ENCODE measurements at regions of chr11 and their contacts with region 1.

Region 1: GRCh38 chr11:35391922-35392813 is 27.2 kb downstream of the SLC1A2 start:
- DNase-seq: peak; percentile 74 to 82 (median 78)
- H3K4me3 ChIP-seq: peak overlapping the region in 1 of 2 donors; percentile 16
- H3K4me3 Mint-ChIP-seq: peak overlapping the region; percentile 22 to 79 (median 64)
- H3K27ac ChIP-seq: no peak overlapping the region
- H3K27ac Mint-ChIP-seq: peak overlapping the region in 5 of 7 donors; percentile 5 to 74 (median 47)
- H3K4me1 ChIP-seq: peaks cover 19% of the 10 kb centered on the region
- H3K4me1 Mint-ChIP-seq: peaks cover 13 to 27% (median 19%) of the 10 kb centered on the region in 4 donors
- H3K27me3 ChIP-seq: no peaks in the 10 kb centered on the region
- H3K27me3 Mint-ChIP-seq: no peaks in the 10 kb centered on the region

Region 2: GRCh38 chr11:34512840-34513681 is 879.1 kb before region 1 on chr11:
- CTCF ChIA-PET with region 1: interaction called, 9 read pairs
- POLR2A ChIA-PET with region 1: no interaction called
- intact Hi-C with region 1: loop called (anchors 1 kb)
- DNase-seq: peak in 4 of 5 donors; percentile 16 to 20 (median 18)
- H3K4me3 ChIP-seq: no peak overlapping the region
- H3K4me3 Mint-ChIP-seq: no peak overlapping the region
- H3K27ac ChIP-seq: no peak overlapping the region
- H3K27ac Mint-ChIP-seq: no peak overlapping the region
- H3K4me1 ChIP-seq: no peaks in the 10 kb centered on the region
- H3K4me1 Mint-ChIP-seq: peaks cover 0 to 1% (median 0%) of the 10 kb centered on the region in 4 donors
- H3K27me3 ChIP-seq: no peaks in the 10 kb centered on the region
- H3K27me3 Mint-ChIP-seq: peaks cover 0 to under 1% of the 10 kb centered on the region in 2 donors

Region 3: GRCh38 chr11:34840736-34841386 is 551.3 kb before region 1 on chr11:
- CTCF ChIA-PET with region 1: interaction called, 4 read pairs
- POLR2A ChIA-PET with region 1: no interaction called
- intact Hi-C with region 1: loop called (anchors 1 kb)
- DNase-seq: peak in 2 of 5 donors; percentile 14 to 15
- H3K4me3 ChIP-seq: no peak overlapping the region
- H3K4me3 Mint-ChIP-seq: no peak overlapping the region
- H3K27ac ChIP-seq: no peak overlapping the region
- H3K27ac Mint-ChIP-seq: no peak overlapping the region
- H3K4me1 ChIP-seq: no peaks in the 10 kb centered on the region
- H3K4me1 Mint-ChIP-seq: no peaks in the 10 kb centered on the region
- H3K27me3 ChIP-seq: no peaks in the 10 kb centered on the region
- H3K27me3 Mint-ChIP-seq: peaks cover 11 to 25% of the 10 kb centered on the region in 2 donors

Region 4: GRCh38 chr11:34997952-34998528 is 394.1 kb before region 1 on chr11:
- CTCF ChIA-PET with region 1: interaction called, 56 read pairs
- POLR2A ChIA-PET with region 1: no interaction called
- intact Hi-C with region 1: loop called (anchors 1 kb)
- DNase-seq: peak in 4 of 5 donors; percentile 37 to 48 (median 44)
- H3K4me3 ChIP-seq: no peak overlapping the region
- H3K4me3 Mint-ChIP-seq: peak overlapping the region in 6 of 8 donors; percentile 62 to 78 (median 75)
- H3K27ac ChIP-seq: peak overlapping the region; percentile 45
- H3K27ac Mint-ChIP-seq: peak overlapping the region; percentile 57 to 95 (median 86)
- H3K4me1 ChIP-seq: peaks cover 24% of the 10 kb centered on the region
- H3K4me1 Mint-ChIP-seq: peaks cover 20 to 34% (median 24%) of the 10 kb centered on the region in 4 donors
- H3K27me3 ChIP-seq: no peaks in the 10 kb centered on the region
- H3K27me3 Mint-ChIP-seq: no peaks in the 10 kb centered on the region

Region 5: GRCh38 chr11:35214792-35215193 is 177.4 kb before region 1 on chr11:
- CTCF ChIA-PET with region 1: no interaction called
- POLR2A ChIA-PET with region 1: no interaction called
- intact Hi-C with region 1: loop called (anchors 5 kb)
- DNase-seq: peak in 1 of 5 donors; percentile 77
- H3K4me3 ChIP-seq: no peak overlapping the region
- H3K4me3 Mint-ChIP-seq: peak overlapping the region in 6 of 8 donors; percentile 7 to 76 (median 16)
- H3K27ac ChIP-seq: no peak overlapping the region
- H3K27ac Mint-ChIP-seq: peak overlapping the region; percentile 78 to 99 (median 91)
- H3K4me1 ChIP-seq: peaks cover 65% of the 10 kb centered on the region
- H3K4me1 Mint-ChIP-seq: peaks cover 57 to 92% (median 73%) of the 10 kb centered on the region in 4 donors
- H3K27me3 ChIP-seq: no peaks in the 10 kb centered on the region
- H3K27me3 Mint-ChIP-seq: no peaks in the 10 kb centered on the region

Region 6: GRCh38 chr11:35373284-35373933 is 18.8 kb before region 1 on chr11:
- CTCF ChIA-PET with region 1: interaction called, 22 read pairs
- POLR2A ChIA-PET with region 1: no interaction called
- intact Hi-C with region 1: no loop called
- DNase-seq: no peak
- H3K4me3 ChIP-seq: no peak overlapping the region
- H3K4me3 Mint-ChIP-seq: no peak overlapping the region
- H3K27ac ChIP-seq: no peak overlapping the region
- H3K27ac Mint-ChIP-seq: peak overlapping the region in 3 of 7 donors; percentile 38 to 77 (median 70)
- H3K4me1 ChIP-seq: no peaks in the 10 kb centered on the region
- H3K4me1 Mint-ChIP-seq: peaks cover 0 to 3% (median 3%) of the 10 kb centered on the region in 4 donors
- H3K27me3 ChIP-seq: no peaks in the 10 kb centered on the region
- H3K27me3 Mint-ChIP-seq: peaks cover 0 to 1% of the 10 kb centered on the region in 2 donors

Region 7: DNA sequence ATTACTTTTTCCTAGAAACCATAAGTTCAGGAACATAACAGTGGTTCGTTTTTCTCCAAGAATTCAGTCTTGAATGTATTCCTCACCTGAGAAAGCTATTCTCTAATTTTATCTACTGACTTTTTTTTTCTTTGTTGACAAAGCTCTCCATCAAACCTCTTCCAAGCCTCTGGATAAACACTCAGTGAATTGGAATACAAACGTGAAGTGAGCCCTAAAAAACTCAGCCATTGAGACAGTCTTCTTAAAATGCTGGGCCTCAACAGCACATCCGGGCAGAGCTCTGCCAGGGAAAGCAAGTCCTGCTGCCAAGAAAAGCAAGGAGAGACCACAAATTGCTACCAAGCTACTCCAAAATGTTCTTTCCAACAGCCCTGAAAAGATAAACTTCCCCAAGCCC is 34.9 kb after region 1 on chr11:
- CTCF ChIA-PET with region 1: no interaction called
- POLR2A ChIA-PET with region 1: no interaction called
- intact Hi-C with region 1: no loop called
- DNase-seq: no peak
- H3K4me3 ChIP-seq: no peak overlapping the region
- H3K4me3 Mint-ChIP-seq: no peak overlapping the region
- H3K27ac ChIP-seq: no peak overlapping the region
- H3K27ac Mint-ChIP-seq: no peak overlapping the region
- H3K4me1 ChIP-seq: no peaks in the 10 kb centered on the region
- H3K4me1 Mint-ChIP-seq: no peaks in the 10 kb centered on the region
- H3K27me3 ChIP-seq: peaks cover 4% of the 10 kb centered on the region
- H3K27me3 Mint-ChIP-seq: peaks cover 48 to 66% of the 10 kb centered on the region in 2 donors

Region 8: GRCh38 chr11:35485656-35486322 is 93.6 kb after region 1 on chr11:
- CTCF ChIA-PET with region 1: interaction called, 5 read pairs
- POLR2A ChIA-PET with region 1: no interaction called
- intact Hi-C with region 1: loop called (anchors 1 kb)
- DNase-seq: peak; percentile 37 to 58 (median 53)
- H3K4me3 ChIP-seq: no peak overlapping the region
- H3K4me3 Mint-ChIP-seq: no peak overlapping the region
- H3K27ac ChIP-seq: no peak overlapping the region
- H3K27ac Mint-ChIP-seq: peak overlapping the region in 1 of 7 donors; percentile 33
- H3K4me1 ChIP-seq: no peaks in the 10 kb centered on the region
- H3K4me1 Mint-ChIP-seq: no peaks in the 10 kb centered on the region
- H3K27me3 ChIP-seq: peaks cover 15% of the 10 kb centered on the region
- H3K27me3 Mint-ChIP-seq: peaks cover 36 to 43% of the 10 kb centered on the region in 2 donors

Measured in CD4-positive, alpha-beta memory T cell (primary cell).